ENCODE measurements at regions of chr6 and their contacts with region 1.

Region 1: DNA sequence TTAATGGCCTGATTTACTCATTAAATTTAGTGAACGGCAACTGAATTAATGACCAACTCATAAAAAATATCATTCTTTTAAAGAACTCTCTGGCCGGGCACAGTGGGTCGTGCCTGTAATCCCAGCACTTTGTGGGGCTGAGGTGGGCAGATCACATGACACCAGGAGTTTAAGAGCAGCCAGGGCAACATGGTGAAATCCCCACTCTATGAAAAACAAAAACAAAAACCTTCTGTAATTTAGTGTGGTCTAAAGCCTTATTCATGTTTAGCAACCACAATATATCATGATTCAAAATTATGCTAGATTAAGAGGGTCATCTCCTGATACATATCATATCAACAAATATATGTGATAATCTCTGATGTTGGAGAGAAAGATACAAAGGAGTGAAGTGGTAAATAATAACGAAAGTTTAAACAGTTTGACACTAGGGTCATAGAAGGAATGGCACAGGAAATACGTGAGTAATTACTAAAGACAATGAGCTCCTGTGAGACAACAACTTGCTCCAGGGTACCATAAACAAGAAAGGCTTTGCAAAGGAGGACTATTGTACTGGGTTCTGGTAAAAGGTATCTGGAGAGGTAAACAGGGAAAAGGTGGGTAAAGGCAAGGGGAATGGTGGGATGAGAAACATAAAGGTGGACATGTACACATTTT is 5.7 kb downstream of the ELOVL4 start:
- DNase-seq: peak; percentile 17
- H3K4me3 ChIP-seq: no peak overlapping the region
- H3K27ac ChIP-seq: no peak overlapping the region
- H3K4me1 ChIP-seq: peaks cover 20% of the 10 kb centered on the region
- H3K27me3 ChIP-seq: no peaks in the 10 kb centered on the region
- CTCF ChIP-seq: no peak

Region 2: GRCh38 chr6:79762370-79762769 is 179.2 kb before region 1 on chr6:
- CTCF ChIA-PET with region 1: no interaction called
- dilution Hi-C with region 1: no loop called
- in situ Hi-C with region 1: no loop called
- intact Hi-C with region 1: no loop called
- DNase-seq: no peak
- H3K4me3 ChIP-seq: no peak overlapping the region
- H3K27ac ChIP-seq: no peak overlapping the region
- H3K4me1 ChIP-seq: no peaks in the 10 kb centered on the region
- H3K27me3 ChIP-seq: peaks cover 2% of the 10 kb centered on the region
- CTCF ChIP-seq: peak; percentile 29 to 44

Region 3: GRCh38 chr6:79894939-79895338 is 46.7 kb before region 1 on chr6:
- CTCF ChIA-PET with region 1: no interaction called
- dilution Hi-C with region 1: loop called (anchors 5 kb)
- in situ Hi-C with region 1: no loop called
- intact Hi-C with region 1: no loop called
- DNase-seq: peak; percentile 58
- H3K4me3 ChIP-seq: no peak overlapping the region
- H3K27ac ChIP-seq: peak overlapping the region; percentile 70
- H3K4me1 ChIP-seq: peaks cover 22% of the 10 kb centered on the region
- H3K27me3 ChIP-seq: no peaks in the 10 kb centered on the region
- CTCF ChIP-seq: no peak

Measured in mammary epithelial cell (primary cell).